ENCODE measurements at regions of chr16 and their contacts with region 1.

Region 1: GRCh38 chr16:75647492-75648264 is at the starts of genes KARS1 and TERF2IP:
- H3K4me3 Mint-ChIP-seq: peak within 1 kb of the TSS; percentile 98
- H3K27ac Mint-ChIP-seq: peak within 1 kb of the TSS; percentile 96
- H3K4me1 Mint-ChIP-seq: peaks cover 44% of the 10 kb centered on the region
- H3K27me3 Mint-ChIP-seq: no peaks in the 10 kb centered on the region

Region 2: DNA sequence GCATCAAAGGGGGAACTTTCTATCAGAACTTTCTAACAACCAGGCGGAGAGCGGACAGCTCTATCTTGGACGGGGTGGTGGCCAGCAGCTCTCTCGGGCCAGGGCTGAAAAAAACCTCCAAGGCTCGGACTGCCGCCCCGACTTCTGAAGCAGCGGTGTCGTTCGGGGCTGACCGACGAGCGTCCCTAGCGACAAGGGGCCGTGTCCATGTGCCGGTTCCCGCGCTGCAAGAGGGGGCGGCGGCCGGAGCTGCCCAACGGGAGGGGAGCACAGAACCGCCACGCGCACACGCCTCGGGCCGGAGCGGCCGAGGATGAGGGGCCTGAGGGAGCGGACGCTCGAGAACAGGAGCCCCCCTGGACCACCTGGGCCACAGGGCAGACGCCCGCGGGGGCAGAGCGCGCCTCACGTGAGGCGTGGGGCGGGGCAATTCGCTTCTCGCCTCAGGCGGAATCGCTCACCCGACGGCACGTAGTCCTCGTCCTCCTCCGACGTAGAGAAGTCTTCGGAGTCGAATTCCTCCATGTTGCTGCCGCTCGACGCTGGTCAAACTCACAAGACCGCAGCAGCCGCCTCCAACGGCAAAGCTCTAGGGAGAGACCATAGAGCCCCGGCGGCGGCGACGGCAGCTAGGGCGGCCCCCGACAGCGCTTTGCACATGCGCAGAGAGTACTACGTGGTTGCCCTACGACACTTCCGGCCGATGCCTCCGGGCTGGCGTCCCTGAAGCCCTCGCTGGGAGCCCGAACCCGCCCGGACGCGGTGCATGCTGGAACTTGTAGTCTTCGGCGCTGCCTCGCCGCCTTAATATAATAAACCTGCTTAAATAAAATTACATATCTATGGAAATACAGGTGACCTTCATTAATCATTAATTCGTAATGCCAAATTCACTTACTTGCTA is 214.6 kb before region 1 on chr16 and contains the start of gene CFDP1:
- intact Hi-C with region 1: loop called (anchors 1 kb)
- H3K4me3 Mint-ChIP-seq: peak within 1 kb of the TSS; percentile 92
- H3K27ac Mint-ChIP-seq: peak within 1 kb of the TSS; percentile 96
- H3K4me1 Mint-ChIP-seq: peaks cover 43% of the 10 kb centered on the region
- H3K27me3 Mint-ChIP-seq: peaks cover 7% of the 10 kb centered on the region

Region 3: GRCh38 chr16:75566040-75566810 is 81.5 kb before region 1 on chr16 and contains the start of gene GABARAPL2:
- intact Hi-C with region 1: loop called (anchors 5 kb)
- H3K4me3 Mint-ChIP-seq: peak within 1 kb of the TSS; percentile 96
- H3K27ac Mint-ChIP-seq: peak within 1 kb of the TSS; percentile 84
- H3K4me1 Mint-ChIP-seq: peaks cover 44% of the 10 kb centered on the region
- H3K27me3 Mint-ChIP-seq: peaks cover 19% of the 10 kb centered on the region

Region 4: DNA sequence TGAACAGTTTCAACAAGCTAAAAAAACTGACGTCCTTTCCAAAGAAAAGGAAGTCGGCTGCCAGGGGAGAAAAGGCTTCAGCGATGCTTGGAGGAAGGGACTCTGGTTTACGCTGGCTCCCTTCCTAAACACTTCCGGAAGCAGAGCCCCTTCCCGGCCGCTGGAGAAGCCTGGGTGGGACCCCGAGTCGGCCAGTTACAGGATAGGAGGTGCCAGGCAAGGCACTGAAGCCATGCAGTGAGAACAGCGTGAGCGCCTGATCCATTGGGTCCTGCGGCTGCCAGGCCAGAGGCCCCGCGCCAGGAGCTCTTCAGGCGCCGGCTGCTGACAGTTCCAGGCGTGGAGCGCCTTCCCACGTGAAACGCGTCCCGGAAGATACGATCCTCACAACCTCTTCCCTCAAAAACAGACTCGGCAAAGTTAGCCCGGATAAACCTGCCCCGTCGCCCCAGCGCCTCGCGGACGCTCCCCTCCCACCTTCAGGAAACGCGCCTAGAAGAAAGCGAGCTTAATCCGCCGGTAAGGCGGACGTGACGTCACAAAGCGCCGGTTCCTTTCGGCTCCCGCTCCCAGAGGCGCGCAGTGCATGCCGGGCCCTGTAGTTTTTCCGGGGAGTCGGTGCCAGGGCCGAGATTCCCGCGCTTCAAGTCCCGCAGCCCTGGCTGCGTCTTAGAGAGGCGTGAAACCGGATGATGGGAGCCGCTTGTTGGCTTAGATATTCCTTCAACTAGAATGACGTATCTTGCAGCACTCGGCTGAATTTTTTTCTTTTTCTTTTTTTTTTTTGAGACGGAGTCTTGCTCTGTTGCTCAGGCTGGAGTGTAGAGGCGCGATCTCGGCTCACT is 24.7 kb before region 1 on chr16 and contains the start of gene ADAT1:
- intact Hi-C with region 1: loop called (anchors 1 kb)
- H3K4me3 Mint-ChIP-seq: peak within 1 kb of the TSS; percentile 88
- H3K27ac Mint-ChIP-seq: peak within 1 kb of the TSS; percentile 97
- H3K4me1 Mint-ChIP-seq: peaks cover 28% of the 10 kb centered on the region
- H3K27me3 Mint-ChIP-seq: no peaks in the 10 kb centered on the region

Region 5: DNA sequence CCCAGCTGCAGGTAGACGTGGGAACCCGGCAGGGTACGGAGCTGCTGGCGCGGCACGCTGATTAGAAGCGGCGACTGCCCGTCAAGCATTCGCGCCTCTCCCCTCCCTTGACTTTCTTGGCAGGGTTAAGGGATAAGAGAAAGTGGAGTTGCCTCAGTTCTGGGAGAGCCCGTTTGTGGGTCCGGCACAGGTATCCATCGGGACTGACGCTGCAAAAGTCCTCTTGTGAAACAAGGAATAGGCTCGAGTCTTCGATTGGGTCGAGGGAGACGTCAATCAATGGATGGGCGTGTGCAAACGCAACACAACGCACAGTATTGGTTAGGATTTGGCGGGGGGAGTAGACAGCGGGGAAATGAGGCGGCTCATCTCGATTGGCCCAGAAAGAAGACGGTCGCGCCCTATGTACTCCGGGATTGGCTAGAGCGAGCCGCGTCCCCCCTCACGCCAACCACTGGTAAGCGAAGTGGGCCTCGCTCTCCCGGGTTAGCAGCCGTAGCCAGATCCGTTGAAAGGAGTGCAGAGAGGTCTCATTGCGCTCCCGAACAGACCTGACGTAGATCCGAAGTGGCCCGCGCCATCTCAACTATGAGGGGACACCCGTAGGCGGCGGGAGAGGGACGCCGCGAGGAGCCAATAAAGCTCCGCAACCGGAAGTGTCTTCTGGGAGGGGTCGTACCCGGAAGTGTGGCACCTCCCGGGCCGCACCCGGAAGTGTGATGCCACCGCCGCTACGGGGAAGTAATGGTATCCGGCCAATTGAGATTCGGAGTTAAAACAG is 1543.0 kb after region 1 on chr16 and contains the start of gene MON1B:
- intact Hi-C with region 1: loop called (anchors 5 kb)
- H3K4me3 Mint-ChIP-seq: peak within 1 kb of the TSS; percentile 87
- H3K27ac Mint-ChIP-seq: peak within 1 kb of the TSS; percentile 99
- H3K4me1 Mint-ChIP-seq: peaks cover 37% of the 10 kb centered on the region
- H3K27me3 Mint-ChIP-seq: peaks cover 8% of the 10 kb centered on the region

Measured in dendritic cell treated with granulocyte-macrophage colony-stimulating factor and Interleukin-4, amounts not matched to agents 40 ng/mL and 50 ng/mL, for 4 days (primary cell).